MCF 10A (cell line): ENCODE measurements at regions of chr4 and their contacts with region 1.

Region 1: DNA sequence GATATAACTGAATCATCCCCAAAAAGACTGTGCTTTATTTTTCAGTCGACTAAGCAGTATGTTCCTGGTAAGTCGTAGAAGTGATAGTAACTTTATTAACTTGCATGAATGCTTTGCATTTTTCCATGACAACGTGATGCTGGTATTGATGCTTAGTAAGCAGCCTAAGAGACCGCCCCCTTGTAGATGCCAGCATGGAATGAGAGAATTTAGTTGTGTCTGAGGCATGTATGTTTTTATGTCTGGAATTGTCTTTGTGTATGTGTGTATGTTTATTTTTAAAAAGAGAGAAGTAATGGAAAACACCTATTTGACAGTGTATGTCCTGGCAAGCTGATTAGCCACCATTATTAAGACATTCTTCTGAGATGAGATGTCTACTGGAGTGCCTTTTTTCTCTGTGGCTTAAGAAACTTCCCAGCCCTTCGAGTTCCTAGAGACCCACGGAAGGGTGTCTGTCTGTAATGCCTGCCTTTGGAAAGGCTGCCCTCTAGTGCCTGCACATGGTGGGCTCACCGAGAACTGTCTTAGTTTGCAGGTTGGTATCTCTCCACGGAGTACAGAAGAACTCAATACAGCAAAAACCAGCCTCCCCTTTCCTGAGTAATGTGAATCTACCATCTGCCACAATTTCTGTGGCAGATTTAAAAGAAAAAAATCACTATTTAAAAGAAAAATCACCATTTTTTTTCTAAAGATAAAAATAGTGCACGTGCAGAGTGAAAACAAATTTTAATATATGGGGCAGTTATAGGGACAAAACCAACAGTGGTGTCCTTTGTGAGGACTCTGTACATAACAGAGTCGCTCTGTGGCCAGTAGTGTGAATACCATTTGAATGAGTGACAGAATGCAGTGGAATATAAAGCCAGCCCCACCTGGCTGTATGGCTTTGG is 85.9 kb downstream of the AASDH start:
- DNase-seq: peak; percentile 79
- H3K4me3 Mint-ChIP-seq: no peak overlapping the region
- H3K27ac Mint-ChIP-seq: no peak overlapping the region
- H3K4me1 Mint-ChIP-seq: peaks cover 9% of the 10 kb centered on the region
- H3K27me3 Mint-ChIP-seq: no peaks in the 10 kb centered on the region
- CTCF ChIP-seq: peak; percentile 93

Region 2: GRCh38 chr4:55948726-55949474 is 352.5 kb before region 1 on chr4 and contains the start of gene CEP135:
- CTCF ChIA-PET with region 1: interaction called, 14 read pairs
- POLR2A ChIA-PET with region 1: interaction called, 3 read pairs
- intact Hi-C with region 1: loop called (anchors 1 kb)
- DNase-seq: peak; percentile 90
- H3K4me3 Mint-ChIP-seq: peak within 1 kb of the TSS; percentile 91
- H3K27ac Mint-ChIP-seq: peak within 1 kb of the TSS; percentile 97
- H3K4me1 Mint-ChIP-seq: peaks cover 23% of the 10 kb centered on the region
- H3K27me3 Mint-ChIP-seq: no peaks in the 10 kb centered on the region
- CTCF ChIP-seq: peak; percentile 91
- total RNA-seq, gene CEP135: 12.4 and 14.0 TPM in 2 replicates

Region 3: DNA sequence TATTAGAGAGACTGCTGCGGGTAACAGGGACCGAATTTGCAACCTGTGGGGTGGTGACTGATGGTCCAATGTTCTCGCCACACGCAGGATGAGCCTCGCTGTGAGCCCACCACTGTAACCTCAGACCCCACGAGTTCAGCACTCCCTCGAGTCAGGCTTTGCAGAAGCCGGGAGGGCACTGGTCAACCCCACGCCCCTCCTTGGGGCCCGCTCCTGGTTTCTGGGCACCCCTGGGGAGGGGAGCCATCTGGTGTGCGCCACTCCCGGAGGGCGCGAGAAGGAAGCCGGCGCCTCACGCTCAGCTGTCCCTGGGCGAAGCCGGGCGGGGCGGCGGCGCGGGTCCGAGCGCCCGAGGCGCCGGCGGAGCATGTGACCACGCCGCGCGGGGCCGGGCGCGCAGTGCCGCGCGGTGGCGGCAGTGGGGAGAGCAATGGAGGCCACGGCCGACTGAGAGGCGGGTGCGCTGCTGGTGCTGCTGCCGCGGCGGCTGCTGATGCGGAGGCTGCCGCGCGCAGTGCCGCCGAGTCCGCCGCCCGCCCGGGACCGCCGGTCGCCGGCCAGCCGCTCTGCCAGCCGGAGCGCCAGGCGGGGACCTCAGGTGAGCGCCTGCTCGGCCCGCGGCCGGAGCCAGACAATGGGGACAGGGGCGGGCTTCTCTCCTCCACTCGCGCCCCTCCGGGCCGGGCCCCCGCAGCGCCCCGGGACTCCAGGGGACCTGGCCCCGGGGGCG is 252.6 kb before region 1 on chr4:
- CTCF ChIA-PET with region 1: interaction called, 7 read pairs
- POLR2A ChIA-PET with region 1: interaction called, 3 read pairs
- intact Hi-C with region 1: loop called (anchors 1 kb)
- DNase-seq: peak; percentile 38
- H3K4me3 Mint-ChIP-seq: peak overlapping the region; percentile 79
- H3K27ac Mint-ChIP-seq: no peak overlapping the region
- H3K4me1 Mint-ChIP-seq: peaks cover 9% of the 10 kb centered on the region
- H3K27me3 Mint-ChIP-seq: peaks cover 11% of the 10 kb centered on the region
- CTCF ChIP-seq: peak; percentile 20

Region 4: GRCh38 chr4:56129431-56129861 is 172.0 kb before region 1 on chr4:
- CTCF ChIA-PET with region 1: interaction called, 3 read pairs
- POLR2A ChIA-PET with region 1: interaction called, 3 read pairs
- intact Hi-C with region 1: loop called (anchors 1 kb)
- DNase-seq: peak; percentile 58
- H3K4me3 Mint-ChIP-seq: no peak overlapping the region
- H3K27ac Mint-ChIP-seq: no peak overlapping the region
- H3K4me1 Mint-ChIP-seq: no peaks in the 10 kb centered on the region
- H3K27me3 Mint-ChIP-seq: no peaks in the 10 kb centered on the region
- CTCF ChIP-seq: peak; percentile 29

Region 5: GRCh38 chr4:56229947-56230346 is 71.5 kb before region 1 on chr4:
- CTCF ChIA-PET with region 1: no interaction called
- POLR2A ChIA-PET with region 1: no interaction called
- intact Hi-C with region 1: no loop called
- DNase-seq: no peak
- H3K4me3 Mint-ChIP-seq: no peak overlapping the region
- H3K27ac Mint-ChIP-seq: no peak overlapping the region
- H3K4me1 Mint-ChIP-seq: no peaks in the 10 kb centered on the region
- H3K27me3 Mint-ChIP-seq: no peaks in the 10 kb centered on the region
- CTCF ChIP-seq: no peak

Region 6: DNA sequence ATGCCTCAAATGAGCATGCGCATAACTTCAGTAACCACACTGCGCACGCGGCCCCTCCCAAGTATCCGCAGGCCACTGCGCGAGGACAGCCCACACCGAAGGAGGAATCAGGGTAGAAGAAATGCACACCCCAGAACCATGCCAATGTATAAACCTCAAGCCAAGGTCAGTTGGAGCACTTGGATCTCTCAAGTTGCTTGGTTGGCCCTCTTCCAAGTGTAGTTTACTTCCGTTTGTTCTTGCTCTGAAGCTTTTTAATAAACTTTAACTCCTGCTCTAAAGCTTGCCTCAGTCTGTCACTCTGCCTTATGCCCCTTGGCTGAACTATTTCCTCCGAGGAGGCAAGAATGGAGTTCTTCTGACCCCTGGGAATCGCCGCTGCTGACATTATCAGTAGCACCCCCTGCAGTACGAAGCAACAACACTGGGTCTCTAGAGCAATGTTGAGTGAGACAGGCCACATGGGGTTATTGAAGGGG is 542.0 kb after region 1 on chr4:
- CTCF ChIA-PET with region 1: no interaction called
- POLR2A ChIA-PET with region 1: no interaction called
- intact Hi-C with region 1: loop called (anchors 5 kb)
- DNase-seq: no peak
- H3K4me3 Mint-ChIP-seq: no peak overlapping the region
- H3K27ac Mint-ChIP-seq: no peak overlapping the region
- H3K4me1 Mint-ChIP-seq: no peaks in the 10 kb centered on the region
- H3K27me3 Mint-ChIP-seq: no peaks in the 10 kb centered on the region
- CTCF ChIP-seq: no peak